ENCODE measurements at regions of chr3 and their contacts with region 1.

Region 1: GRCh38 chr3:128969993-128970739 is 23.7 kb downstream of the CFAP92 start:
- DNase-seq: no peak
- H3K4me3 ChIP-seq: no peak overlapping the region
- H3K27ac ChIP-seq: peak overlapping the region; percentile 21
- H3K27me3 ChIP-seq: peaks cover 14% of the 10 kb centered on the region
- CTCF ChIP-seq: peak; percentile 95

Region 2: GRCh38 chr3:128814519-128815317 is 155.4 kb before region 1 on chr3:
- CTCF ChIA-PET with region 1: no interaction called
- POLR2A ChIA-PET with region 1: no interaction called
- DNase-seq: no peak
- H3K4me3 ChIP-seq: no peak overlapping the region
- H3K27ac ChIP-seq: no peak overlapping the region
- H3K27me3 ChIP-seq: no peaks in the 10 kb centered on the region
- CTCF ChIP-seq: no peak

Region 3: GRCh38 chr3:128983293-128984069 is 13.3 kb after region 1 on chr3:
- CTCF ChIA-PET with region 1: interaction called, 10 read pairs
- POLR2A ChIA-PET with region 1: no interaction called
- DNase-seq: no peak
- H3K4me3 ChIP-seq: no peak overlapping the region
- H3K27ac ChIP-seq: no peak overlapping the region
- H3K27me3 ChIP-seq: peaks cover 17% of the 10 kb centered on the region
- CTCF ChIP-seq: no peak

Region 4: GRCh38 chr3:129026728-129027543 is 56.8 kb after region 1 on chr3:
- CTCF ChIA-PET with region 1: interaction called, 19 read pairs
- POLR2A ChIA-PET with region 1: no interaction called
- DNase-seq: no peak
- H3K4me3 ChIP-seq: no peak overlapping the region
- H3K27ac ChIP-seq: no peak overlapping the region
- H3K27me3 ChIP-seq: peaks cover 37% of the 10 kb centered on the region
- CTCF ChIP-seq: peak; percentile 8; the same call in 1 of the 2 replicates

Region 5: DNA sequence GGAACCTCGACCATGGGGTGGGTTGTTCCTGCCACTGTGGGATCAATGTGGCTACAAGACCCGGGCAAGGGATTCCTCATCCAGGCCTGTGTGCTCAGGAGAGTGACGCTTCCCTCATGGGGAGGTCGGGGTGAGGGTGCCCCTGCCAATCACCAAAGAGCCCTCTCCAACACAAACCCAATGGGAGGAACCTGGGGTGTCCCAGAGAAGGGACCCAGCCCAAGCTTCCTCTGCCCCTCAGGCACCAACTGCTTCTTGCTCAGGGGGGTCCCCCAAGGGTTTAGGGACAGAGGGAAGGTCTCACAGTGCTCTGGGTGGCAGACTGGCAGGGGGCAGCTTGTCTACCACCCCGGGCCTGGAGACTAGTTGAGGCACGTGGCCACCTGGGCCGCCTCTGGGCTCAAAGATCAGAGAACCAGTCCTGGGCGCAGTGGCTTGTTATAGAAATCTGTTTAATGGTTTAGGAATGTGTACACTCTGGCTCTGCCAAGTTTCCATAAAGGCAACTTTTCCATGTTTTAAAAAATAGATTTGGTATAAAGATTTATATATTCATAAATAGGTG is 117.1 kb after region 1 on chr3:
- CTCF ChIA-PET with region 1: interaction called, 39 read pairs
- POLR2A ChIA-PET with region 1: no interaction called
- DNase-seq: no peak
- H3K4me3 ChIP-seq: no peak overlapping the region
- H3K27ac ChIP-seq: peak overlapping the region; percentile 47
- H3K27me3 ChIP-seq: no peaks in the 10 kb centered on the region
- CTCF ChIP-seq: no peak

Region 6: DNA sequence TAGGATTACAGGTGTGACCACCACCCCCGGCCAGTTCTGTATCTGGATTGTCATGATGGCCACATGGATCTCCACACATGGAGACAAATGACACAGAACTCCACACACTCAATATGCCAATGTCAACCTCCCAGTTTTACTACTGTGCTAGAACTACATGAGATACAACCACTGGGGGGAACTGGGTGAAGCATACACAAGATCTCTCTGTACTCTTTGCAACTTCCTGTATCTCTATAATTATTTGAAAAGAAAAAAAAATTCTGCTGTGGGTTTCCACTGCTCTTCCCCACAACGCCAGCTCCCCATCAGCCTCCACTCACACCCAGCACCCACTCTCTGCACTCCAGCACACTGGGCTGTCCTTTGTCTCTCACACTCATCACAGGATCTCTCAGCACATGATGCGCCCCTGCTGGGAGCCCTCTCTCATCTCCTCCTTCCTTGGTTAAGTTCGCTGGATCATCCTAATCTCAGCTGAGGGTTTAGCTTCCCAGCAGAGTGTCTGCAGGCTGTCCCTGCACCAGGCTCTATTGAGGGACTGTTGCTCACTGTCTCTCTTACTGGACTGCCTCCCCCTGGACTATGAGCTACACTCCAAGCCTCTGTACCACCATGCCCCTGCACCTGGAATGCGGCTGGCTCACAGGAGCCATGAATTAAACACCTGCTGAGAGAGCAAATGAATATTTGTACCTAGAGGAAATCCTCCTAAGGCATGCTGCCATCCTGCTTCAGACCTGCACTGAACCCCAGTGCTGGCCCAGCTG is 162.1 kb after region 1 on chr3:
- CTCF ChIA-PET with region 1: interaction called, 14 read pairs
- POLR2A ChIA-PET with region 1: no interaction called
- DNase-seq: no peak
- H3K4me3 ChIP-seq: no peak overlapping the region
- H3K27ac ChIP-seq: no peak overlapping the region
- H3K27me3 ChIP-seq: no peaks in the 10 kb centered on the region
- CTCF ChIP-seq: no peak

Region 7: DNA sequence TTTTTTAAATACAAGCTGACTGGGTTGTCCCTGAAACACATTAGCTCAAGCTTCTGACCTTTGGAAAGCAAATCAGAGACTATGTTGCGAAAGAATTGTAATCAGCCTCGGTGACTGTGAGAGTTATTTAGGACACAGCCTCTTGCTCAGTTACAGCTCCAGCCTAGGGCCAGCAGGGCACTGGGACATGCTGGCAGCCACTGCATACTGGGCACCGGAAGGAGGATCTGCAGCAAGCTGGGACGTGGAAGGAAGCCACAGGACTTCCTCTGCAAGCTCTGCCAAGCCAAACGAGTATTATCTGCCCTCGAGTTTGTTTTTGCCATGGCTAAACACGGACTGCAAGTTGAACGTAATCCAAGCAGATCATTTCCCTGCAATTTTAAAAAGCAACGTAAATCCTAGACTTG is 254.8 kb after region 1 on chr3:
- CTCF ChIA-PET with region 1: interaction called, 10 read pairs
- POLR2A ChIA-PET with region 1: no interaction called
- DNase-seq: no peak
- H3K4me3 ChIP-seq: peak overlapping the region; percentile 35
- H3K27ac ChIP-seq: peak overlapping the region; percentile 77
- H3K27me3 ChIP-seq: no peaks in the 10 kb centered on the region
- CTCF ChIP-seq: no peak

Measured in AG04450 (cell line).